Endothelial cell of umbilical vein (primary cell): ENCODE measurements at regions of chr9 and their contacts with region 1.

Region 1: GRCh38 chr9:6305954-6306563 is 22.1 kb upstream of the TPD52L3 start:
- DNase-seq: peak; percentile 72
- H3K4me3 ChIP-seq: no peak overlapping the region
- H3K27ac ChIP-seq: no peak overlapping the region
- H3K4me1 ChIP-seq: no peaks in the 10 kb centered on the region
- H3K27me3 ChIP-seq: peaks cover 4 to 5% of the 10 kb centered on the region in 2 experiments
- CTCF ChIP-seq: peak; percentile 22 to 34
- POLR2A ChIP-seq: no peak

Region 2: DNA sequence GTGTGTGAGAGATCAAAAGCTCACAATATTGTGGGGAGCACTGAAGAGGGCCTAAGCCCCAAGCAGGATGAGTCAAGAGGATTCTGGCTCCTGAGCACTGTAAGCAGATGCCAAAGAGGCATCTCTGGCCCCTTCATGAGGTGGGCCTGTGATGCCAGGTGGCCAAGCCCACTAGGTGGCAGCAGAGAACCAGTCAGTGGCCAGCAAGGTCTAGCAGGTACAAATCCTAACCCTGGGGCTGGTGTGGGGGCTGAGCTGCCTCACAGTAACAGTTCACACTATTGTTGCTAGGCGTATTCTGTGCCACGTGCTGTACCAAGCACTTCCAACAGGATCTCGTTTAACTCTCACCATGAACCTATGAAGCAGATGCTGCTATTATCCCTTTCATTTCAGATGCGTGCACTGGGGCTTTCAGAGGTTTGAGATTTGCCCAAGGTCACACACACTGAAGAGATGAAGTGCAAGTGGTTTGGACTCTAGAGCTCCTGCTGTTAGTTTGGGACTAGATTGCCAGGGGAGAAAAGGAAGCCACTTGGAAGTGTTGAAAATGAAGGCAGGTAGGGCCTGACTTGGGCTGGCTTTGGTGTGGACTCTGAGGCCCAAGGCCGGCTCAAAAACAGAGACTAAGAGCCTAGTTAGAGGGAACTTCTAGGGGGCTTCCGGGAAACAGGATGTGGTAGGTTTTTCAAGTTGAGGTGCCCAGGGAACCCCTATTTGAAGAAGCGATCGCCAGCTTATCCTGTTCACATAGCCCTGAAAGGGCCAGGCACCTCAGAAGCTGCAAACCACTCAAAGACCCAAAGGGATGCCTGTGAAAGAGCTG is 419.7 kb before region 1 on chr9:
- CTCF ChIA-PET with region 1: interaction called, 22 read pairs
- POLR2A ChIA-PET with region 1: no interaction called
- dilution Hi-C with region 1: no loop called
- intact Hi-C with region 1: loop called (anchors 1 kb)
- DNase-seq: peak; percentile 70
- H3K4me3 ChIP-seq: no peak overlapping the region
- H3K27ac ChIP-seq: no peak overlapping the region
- H3K4me1 ChIP-seq: no peaks in the 10 kb centered on the region
- H3K27me3 ChIP-seq: peaks cover 3 to 4% of the 10 kb centered on the region in 2 experiments
- CTCF ChIP-seq: peak; percentile 91 to 97
- POLR2A ChIP-seq: no peak

Region 3: GRCh38 chr9:6106576-6107339 is 199.3 kb before region 1 on chr9:
- CTCF ChIA-PET with region 1: interaction called, 29 read pairs
- POLR2A ChIA-PET with region 1: no interaction called
- dilution Hi-C with region 1: no loop called
- intact Hi-C with region 1: no loop called
- DNase-seq: peak; percentile 44
- H3K4me3 ChIP-seq: no peak overlapping the region
- H3K27ac ChIP-seq: no peak overlapping the region
- H3K4me1 ChIP-seq: peaks cover 9% of the 10 kb centered on the region
- H3K27me3 ChIP-seq: no peaks in the 10 kb centered on the region
- CTCF ChIP-seq: peak in 1 of 2 donors; percentile 32
- POLR2A ChIP-seq: no peak

Region 4: DNA sequence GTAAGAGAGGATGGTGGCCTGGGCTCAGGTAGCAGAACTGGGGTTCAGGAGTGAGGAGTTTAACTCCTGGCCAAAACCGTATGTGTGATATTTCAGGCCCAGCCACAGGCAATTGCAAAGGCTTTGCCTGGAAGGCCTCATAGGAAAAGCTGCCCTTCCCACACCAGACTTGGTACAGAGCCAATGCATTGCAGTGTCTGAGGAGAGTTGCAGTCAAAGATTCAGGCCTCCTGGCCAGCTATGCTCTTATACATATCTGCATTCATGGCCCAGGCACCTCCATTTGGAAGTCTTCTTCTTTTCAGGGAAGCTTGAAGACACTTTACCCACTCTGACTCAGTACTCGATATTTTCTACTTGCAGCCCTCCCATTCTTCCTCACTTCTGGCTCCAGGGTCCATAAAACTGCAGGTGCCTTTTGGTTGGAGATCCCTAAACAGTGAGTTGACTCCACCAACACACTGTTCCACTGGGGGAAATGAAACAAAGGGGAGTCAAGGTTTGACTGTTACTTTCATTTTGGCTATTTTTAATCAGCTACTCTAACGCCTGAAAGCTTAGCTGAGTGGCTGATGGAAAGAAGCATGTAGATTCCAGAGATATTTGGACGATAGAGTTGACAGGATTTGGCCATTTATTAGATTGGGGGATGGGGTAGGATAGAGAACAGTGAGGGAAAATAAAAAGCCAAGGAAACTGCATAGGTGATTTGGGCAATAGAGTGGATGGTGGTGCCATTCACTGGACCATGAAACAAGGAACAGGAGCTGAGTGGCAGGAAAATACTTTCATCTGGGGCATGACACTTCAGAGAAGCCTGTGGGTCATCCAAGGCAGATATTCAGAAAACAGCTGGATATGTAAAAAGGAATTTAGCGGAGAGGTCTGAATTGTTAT is 121.1 kb before region 1 on chr9:
- CTCF ChIA-PET with region 1: interaction called, 25 read pairs
- POLR2A ChIA-PET with region 1: no interaction called
- dilution Hi-C with region 1: no loop called
- intact Hi-C with region 1: no loop called
- DNase-seq: peak; percentile 63
- H3K4me3 ChIP-seq: no peak overlapping the region
- H3K27ac ChIP-seq: no peak overlapping the region
- H3K4me1 ChIP-seq: peaks cover 15% of the 10 kb centered on the region
- H3K27me3 ChIP-seq: no peaks in the 10 kb centered on the region
- CTCF ChIP-seq: no peak
- POLR2A ChIP-seq: no peak

Region 5: DNA sequence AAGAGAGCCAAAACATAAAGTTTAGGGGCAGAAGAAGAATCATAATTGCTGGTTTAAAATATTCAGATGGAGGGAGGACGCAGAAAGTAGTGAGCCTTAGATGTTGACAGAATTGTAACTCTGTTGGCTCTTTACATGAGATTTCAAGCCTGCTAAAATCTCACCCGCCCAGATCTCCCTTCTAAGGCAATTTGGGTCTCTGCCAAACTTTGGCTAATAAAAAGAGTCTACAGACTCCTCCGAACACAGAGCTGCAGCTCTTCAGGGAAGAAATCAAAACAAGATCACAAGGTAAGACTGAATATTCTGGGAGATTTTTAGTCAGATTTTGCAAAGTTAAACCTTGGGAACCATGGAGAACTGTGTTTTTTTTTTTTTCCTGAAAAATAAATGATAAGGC is 90.5 kb before region 1 on chr9 and contains the start of gene IL33:
- CTCF ChIA-PET with region 1: interaction called, 30 read pairs
- POLR2A ChIA-PET with region 1: no interaction called
- dilution Hi-C with region 1: no loop called
- intact Hi-C with region 1: no loop called
- DNase-seq: peak; percentile 72
- H3K4me3 ChIP-seq: peak within 1 kb of the TSS in 1 of 3 experiments; percentile 42
- H3K27ac ChIP-seq: no peak within 1 kb of the TSS
- H3K4me1 ChIP-seq: peaks cover 32% of the 10 kb centered on the region
- H3K27me3 ChIP-seq: no peaks in the 10 kb centered on the region
- CTCF ChIP-seq: no peak
- POLR2A ChIP-seq: no peak
- total RNA-seq, gene IL33: 8.5 and 13.8 TPM in 2 replicates